Activated CD4-positive, alpha-beta memory T cell treated with anti-CD3 and anti-CD28 coated beads for 36 hours (primary cell): ENCODE measurements at regions of chr17 and their contacts with region 1.

Region 1: DNA sequence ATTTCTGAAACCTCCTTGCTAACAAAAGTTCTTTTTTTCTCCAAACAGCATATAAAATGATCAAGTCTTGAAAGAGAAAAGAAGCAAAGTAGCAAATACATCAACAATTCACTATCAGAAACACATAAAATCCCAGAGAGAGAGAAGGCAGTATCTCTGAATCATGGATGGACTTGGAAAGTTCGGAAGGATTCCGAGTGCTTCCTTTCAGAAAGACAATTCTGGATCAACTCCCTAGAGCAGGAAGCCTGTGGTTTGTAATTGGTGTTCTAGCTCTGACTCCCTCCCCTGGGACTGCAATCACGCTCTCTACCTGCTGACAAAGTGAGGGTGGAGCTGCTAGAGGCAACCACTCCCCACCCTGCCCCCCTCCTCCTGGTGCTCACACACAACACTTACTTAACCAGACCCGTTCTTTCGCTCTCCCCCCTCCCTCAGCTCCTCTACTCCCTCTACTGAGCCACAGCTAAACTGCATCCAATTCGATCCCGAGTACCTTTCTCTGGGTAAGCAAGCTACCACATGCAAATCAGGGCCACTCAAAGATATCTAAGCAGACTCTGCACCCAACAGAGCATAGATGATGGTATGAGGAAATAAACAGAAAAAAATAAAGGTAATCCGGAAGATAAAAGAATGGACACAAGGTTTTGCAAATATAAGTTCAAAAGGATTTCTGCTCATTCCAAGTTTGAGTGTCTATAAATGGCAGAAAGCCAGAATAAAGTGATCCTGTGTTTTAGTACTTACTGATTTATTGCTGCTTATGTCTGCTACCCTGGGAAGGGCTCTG is at the start of gene RNF43:
- DNase-seq: peak; percentile 93
- H3K4me3 Mint-ChIP-seq: peak within 1 kb of the TSS; percentile 24
- H3K27ac Mint-ChIP-seq: peak within 1 kb of the TSS; percentile 24
- H3K4me1 Mint-ChIP-seq: peaks cover 24% of the 10 kb centered on the region
- H3K27me3 Mint-ChIP-seq: no peaks in the 10 kb centered on the region
- total RNA-seq, gene RNF43: 0.39 to 0.93 TPM

Region 2: DNA sequence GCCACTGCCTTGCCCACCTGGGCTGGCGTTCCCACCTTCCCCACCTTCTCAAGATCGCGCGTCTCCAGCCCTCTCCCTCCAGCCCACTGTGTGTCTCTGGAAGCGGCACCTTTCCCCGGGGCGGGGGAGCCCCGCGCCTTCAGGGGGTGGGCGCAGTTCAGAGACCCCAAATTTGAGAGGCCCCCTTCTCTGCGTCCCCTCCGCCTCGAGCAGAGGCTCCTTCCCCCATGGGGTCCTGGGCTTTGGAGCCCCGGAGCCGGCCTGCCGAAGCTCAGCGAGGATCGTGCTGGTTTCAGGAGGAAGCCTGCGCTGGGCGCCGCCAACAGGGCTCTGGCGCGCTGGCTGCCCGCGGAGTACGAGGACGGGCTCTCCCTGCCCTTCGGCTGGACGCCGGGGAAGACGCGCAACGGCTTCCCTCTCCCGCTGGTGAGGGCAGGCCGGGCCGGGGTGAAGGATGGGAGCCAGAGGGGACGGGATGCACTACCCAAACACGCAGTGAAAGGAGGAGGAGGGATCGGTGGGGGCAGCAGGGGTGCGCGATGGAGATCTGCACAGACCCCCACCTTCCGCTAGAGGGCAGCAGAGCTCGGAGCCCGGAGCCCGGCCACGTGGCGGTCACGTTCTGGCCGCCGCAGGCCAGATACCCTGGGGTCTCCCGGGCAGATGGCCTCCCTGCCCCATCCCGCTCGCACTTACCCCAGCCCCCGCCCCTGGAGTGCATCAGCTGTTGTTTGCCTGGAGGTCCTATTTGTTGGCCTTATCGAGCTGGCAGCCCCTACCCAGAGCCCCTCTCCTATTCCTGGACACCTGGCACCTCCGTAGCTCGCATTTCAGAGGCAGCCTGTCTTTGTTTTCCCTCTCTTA is 168.0 kb before region 1 on chr17:
- CTCF ChIA-PET with region 1: interaction called, 10 read pairs
- POLR2A ChIA-PET with region 1: no interaction called
- intact Hi-C with region 1: no loop called
- DNase-seq: peak; percentile 83
- H3K4me3 Mint-ChIP-seq: peak overlapping the region; percentile 70
- H3K27ac Mint-ChIP-seq: no peak overlapping the region
- H3K4me1 Mint-ChIP-seq: peaks cover 13% of the 10 kb centered on the region
- H3K27me3 Mint-ChIP-seq: peaks cover 18% of the 10 kb centered on the region

Region 3: DNA sequence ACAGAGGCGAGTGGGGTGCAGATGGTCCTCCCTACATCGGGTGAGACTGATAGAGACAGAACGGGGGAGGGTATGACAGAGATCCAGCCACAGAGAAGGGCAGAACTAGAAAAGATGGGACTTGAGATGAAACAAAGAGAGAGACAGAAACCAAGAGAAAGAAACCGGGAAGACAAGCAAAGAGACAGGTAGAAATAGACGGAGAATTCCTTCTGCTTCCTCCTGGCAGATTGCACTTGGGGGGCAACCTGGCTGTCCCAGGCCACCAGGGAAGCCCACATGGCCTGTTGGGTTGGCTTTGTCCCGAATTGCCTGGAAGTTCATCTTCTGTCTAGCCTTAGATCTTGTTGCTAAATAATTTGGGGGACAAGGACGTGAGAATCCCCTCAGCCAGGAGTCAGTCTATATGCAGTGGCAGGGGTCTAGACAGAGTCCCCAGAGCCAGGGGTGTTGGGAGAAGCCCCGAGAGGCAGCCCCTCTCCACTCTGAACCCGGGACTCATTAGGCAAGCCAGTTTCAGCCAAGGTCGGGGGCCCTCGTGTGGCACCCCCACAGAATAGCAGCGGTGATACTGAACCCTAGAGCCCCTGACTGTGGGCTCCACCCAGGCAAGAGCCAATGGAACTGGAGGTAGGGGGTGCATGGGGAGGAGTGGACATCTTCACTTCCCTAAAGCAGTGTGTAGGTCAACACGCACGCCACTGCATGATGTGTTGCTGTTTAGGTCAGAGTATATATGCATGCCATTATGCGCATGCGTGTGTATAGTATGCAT is 88.3 kb before region 1 on chr17:
- CTCF ChIA-PET with region 1: interaction called, 10 read pairs
- POLR2A ChIA-PET with region 1: interaction called, 16 read pairs
- intact Hi-C with region 1: loop called (anchors 1 kb)
- DNase-seq: peak; percentile 92
- H3K4me3 Mint-ChIP-seq: peak overlapping the region; percentile 92
- H3K27ac Mint-ChIP-seq: peak overlapping the region; percentile 98
- H3K4me1 Mint-ChIP-seq: peaks cover 44% of the 10 kb centered on the region
- H3K27me3 Mint-ChIP-seq: peaks cover 25% of the 10 kb centered on the region

Region 4: DNA sequence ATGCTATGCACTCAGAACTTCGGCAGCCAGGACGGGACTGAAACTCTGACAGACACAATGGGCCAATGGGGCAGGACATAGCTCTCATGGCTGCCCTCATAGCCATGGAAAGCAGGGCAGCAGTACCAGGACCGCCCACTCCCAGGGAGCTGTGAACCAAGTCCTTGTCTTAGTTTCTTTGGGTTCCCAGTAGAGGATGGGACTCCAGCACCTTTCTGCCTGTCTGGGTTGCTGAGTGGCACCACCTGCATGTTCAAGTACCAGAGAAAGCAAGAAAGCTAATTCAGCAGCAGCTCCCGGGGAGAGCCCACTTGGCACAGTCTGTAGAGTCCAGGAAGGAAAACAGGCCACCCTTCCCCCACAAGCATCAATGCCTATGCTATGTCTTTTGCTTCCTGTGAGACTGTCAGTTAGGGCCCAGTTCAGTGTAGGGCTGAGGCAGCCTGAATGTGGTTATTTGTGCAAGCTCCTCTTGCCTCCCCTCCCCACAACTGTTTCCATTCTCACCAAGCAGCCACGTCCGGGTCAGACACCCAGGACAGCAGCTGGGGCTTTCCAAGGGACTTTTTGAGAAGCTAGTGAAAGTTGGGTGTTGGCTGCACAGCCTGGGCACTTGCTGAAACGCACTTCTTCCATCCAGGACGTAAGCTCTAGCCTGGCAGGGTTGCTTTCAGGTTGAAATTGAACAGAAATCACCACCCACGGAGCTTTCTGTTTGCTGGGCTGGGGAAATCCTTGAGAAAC is 73.3 kb before region 1 on chr17:
- CTCF ChIA-PET with region 1: interaction called, 35 read pairs
- POLR2A ChIA-PET with region 1: interaction called, 14 read pairs
- intact Hi-C with region 1: loop called (anchors 1 kb)
- DNase-seq: peak; percentile 97
- H3K4me3 Mint-ChIP-seq: peak overlapping the region; percentile 92
- H3K27ac Mint-ChIP-seq: peak overlapping the region; percentile 98
- H3K4me1 Mint-ChIP-seq: peaks cover 56% of the 10 kb centered on the region
- H3K27me3 Mint-ChIP-seq: no peaks in the 10 kb centered on the region

Region 5: DNA sequence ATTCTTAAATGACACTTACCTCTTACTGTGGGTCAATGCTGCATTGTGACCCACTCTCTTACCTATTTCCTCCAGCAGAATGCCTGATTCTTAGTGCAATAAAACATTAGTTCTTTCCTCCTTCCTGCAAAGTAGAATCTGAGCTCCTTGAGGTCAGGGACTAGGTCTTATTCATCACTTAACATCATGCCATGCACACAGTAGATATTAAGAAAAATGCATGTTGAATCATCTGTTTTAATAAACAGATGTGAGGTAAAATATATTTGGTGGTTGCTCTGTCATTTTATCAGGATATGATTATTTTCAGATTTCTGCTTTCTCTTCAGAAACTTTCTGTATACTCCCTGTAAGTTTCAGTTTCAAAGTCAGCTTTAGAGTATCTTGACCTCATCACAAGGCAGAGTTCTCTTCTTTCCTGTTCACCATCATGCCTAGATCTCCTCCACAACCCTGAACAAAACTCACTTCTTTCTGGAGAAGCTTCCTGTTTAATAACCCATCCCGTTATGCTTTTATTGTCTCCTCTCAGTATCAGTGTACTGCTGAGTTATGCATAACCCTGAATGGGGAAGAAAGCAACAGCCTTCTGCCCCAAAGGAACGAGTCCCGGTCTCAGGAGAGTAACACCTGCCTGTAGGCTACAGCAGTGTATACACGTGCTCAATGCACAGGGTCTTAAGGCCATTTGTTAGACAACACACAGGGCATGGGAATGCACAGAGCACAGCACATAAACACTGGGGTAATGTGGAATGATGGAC is 35.2 kb before region 1 on chr17:
- CTCF ChIA-PET with region 1: interaction called, 9 read pairs
- POLR2A ChIA-PET with region 1: interaction called, 6 read pairs
- intact Hi-C with region 1: loop called (anchors 2 kb)
- DNase-seq: no peak
- H3K4me3 Mint-ChIP-seq: no peak overlapping the region
- H3K27ac Mint-ChIP-seq: peak overlapping the region; percentile 11
- H3K4me1 Mint-ChIP-seq: peaks cover 41% of the 10 kb centered on the region
- H3K27me3 Mint-ChIP-seq: no peaks in the 10 kb centered on the region